ENCODE measurements at regions of chr9 and their contacts with region 1.

Region 1: GRCh38 chr9:79201636-79202035 is 370.1 kb upstream of the TLE4 start:
- DNase-seq: no peak
- ATAC-seq: no peak
- H3K4me3 ChIP-seq: no peak overlapping the region
- H3K27ac ChIP-seq: no peak overlapping the region
- H3K4me1 ChIP-seq: no peaks in the 10 kb centered on the region
- H3K27me3 ChIP-seq: no peaks in the 10 kb centered on the region
- CTCF ChIP-seq: no peak
- EP300 ChIP-seq: no peak
- POLR2A ChIP-seq: no peak
- RAD21 ChIP-seq: no peak

Region 2: DNA sequence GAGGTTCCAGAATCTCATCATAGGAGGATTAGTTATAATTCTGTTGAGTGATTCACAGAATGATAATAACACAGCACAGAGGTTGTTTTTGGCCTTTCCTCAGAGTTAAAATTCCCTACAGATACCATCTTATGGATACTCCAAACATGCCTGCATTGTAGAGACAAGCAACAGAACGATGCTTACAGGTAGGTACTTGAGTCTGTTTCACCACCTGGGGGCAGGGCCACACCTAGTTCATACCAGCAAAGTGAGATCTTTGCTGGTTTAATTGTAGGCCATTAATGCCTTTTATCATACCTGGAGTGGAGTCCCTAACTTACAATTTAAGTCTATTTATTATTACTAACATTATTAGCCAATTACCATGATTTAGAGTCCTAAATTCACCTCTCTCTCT is 46.3 kb before region 1 on chr9:
- CTCF ChIA-PET with region 1: no interaction called
- POLR2A ChIA-PET with region 1: no interaction called
- RAD21 ChIA-PET with region 1: no interaction called
- SMC1A ChIA-PET with region 1: no interaction called
- in situ Hi-C with region 1: no loop called
- intact Hi-C with region 1: no loop called
- DNase-seq: no peak
- ATAC-seq: no peak
- H3K4me3 ChIP-seq: no peak overlapping the region
- H3K27ac ChIP-seq: no peak overlapping the region
- H3K4me1 ChIP-seq: no peaks in the 10 kb centered on the region
- H3K27me3 ChIP-seq: no peaks in the 10 kb centered on the region
- CTCF ChIP-seq: no peak
- EP300 ChIP-seq: no peak
- POLR2A ChIP-seq: no peak
- RAD21 ChIP-seq: no peak

Region 3: DNA sequence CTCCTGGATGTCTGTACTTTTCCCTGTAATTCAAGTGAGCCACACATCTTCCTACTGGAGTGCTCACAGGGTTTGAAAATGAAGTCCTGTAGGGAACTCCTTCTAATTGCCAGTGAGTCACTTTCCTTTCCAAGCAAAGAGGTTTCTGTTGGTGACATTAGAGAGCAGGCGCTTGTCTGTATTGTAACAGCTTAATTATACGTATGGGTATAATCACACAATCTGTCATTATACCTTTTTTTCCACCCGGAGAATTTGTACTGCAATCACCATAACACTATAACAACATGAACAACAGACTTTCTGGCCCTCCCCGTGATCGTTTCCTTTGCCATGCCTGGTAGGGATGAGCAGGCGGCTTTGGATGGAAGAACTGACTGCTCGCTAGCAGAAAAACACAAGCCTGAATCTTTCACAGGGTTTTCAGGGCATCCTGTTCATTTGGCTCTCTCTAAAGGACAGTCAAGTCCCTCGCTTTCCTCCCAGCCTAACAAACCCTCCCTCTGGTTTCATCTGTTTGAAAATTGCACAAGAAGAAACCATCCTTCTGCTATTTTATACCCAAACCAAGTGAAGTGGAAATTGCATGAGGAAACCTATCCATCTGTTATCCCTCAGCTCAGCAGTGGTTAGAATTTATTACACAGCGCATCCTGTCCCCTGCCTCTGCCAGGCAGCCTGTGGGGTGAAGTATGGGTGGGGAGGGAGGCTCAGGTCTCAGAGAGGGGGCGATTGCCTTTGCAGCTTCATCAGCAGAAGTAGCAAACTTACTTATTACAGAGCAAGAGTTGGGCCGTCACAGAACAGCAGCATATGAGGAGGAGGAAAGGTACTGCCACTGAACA is 63.1 kb after region 1 on chr9:
- CTCF ChIA-PET with region 1: no interaction called
- POLR2A ChIA-PET with region 1: no interaction called
- RAD21 ChIA-PET with region 1: no interaction called
- SMC1A ChIA-PET with region 1: no interaction called
- in situ Hi-C with region 1: no loop called
- intact Hi-C with region 1: loop called (anchors 10 kb)
- DNase-seq: no peak
- ATAC-seq: no peak
- H3K4me3 ChIP-seq: no peak overlapping the region
- H3K27ac ChIP-seq: no peak overlapping the region
- H3K4me1 ChIP-seq: no peaks in the 10 kb centered on the region
- H3K27me3 ChIP-seq: no peaks in the 10 kb centered on the region; a peak in 1 of 4 replicates
- CTCF ChIP-seq: no peak
- EP300 ChIP-seq: no peak
- POLR2A ChIP-seq: no peak
- RAD21 ChIP-seq: no peak

Region 4: DNA sequence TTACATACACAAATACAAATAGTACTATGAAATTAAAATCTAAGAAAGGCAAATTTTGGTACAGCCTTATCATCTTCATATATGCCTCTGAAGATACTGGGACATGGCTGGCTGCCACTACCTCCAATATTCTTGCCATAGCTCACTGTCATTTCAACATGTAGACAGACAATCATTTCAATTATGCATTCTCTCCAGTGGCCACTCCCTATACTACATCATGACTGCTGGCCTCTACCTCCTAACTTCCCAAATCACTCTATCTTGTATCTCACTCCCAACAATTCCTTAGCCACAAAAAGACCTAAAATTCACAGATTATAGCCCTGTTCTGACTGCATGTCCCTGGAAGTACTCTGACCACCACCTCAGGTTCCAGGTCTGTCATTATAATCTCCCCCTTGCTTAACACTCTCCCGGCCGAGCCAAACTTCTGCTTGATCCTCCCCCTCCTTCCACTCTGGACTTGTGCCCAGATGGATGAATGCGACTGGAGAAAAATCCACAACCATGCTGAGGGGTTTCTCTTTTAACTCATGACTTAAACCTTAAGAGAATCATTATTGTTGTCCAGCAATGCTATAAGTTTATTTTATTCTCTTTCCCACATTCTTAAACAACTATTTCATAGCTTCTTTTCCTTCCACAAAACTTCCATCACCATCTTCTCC is 144.8 kb after region 1 on chr9:
- CTCF ChIA-PET with region 1: no interaction called
- POLR2A ChIA-PET with region 1: no interaction called
- RAD21 ChIA-PET with region 1: no interaction called
- SMC1A ChIA-PET with region 1: no interaction called
- in situ Hi-C with region 1: no loop called
- intact Hi-C with region 1: no loop called
- DNase-seq: no peak
- ATAC-seq: no peak
- H3K4me3 ChIP-seq: no peak overlapping the region
- H3K27ac ChIP-seq: no peak overlapping the region
- H3K4me1 ChIP-seq: no peaks in the 10 kb centered on the region
- H3K27me3 ChIP-seq: no peaks in the 10 kb centered on the region; a peak in 1 of 4 replicates
- CTCF ChIP-seq: no peak
- EP300 ChIP-seq: no peak
- POLR2A ChIP-seq: no peak
- RAD21 ChIP-seq: no peak

Measured in GM12878 (cell line).